GM10248 (cell line): ENCODE measurements at regions of chr2 and their contacts with region 1.

Region 1: GRCh38 chr2:42944779-42945415 is 152.5 kb upstream of the HAAO start:
- DNase-seq: no peak
- CTCF ChIP-seq: no peak

Region 2: GRCh38 chr2:42286268-42286946 is 658.5 kb before region 1 on chr2:
- CTCF ChIA-PET with region 1: no interaction called
- POLR2A ChIA-PET with region 1: no interaction called
- DNase-seq: no peak
- CTCF ChIP-seq: no peak

Region 3: DNA sequence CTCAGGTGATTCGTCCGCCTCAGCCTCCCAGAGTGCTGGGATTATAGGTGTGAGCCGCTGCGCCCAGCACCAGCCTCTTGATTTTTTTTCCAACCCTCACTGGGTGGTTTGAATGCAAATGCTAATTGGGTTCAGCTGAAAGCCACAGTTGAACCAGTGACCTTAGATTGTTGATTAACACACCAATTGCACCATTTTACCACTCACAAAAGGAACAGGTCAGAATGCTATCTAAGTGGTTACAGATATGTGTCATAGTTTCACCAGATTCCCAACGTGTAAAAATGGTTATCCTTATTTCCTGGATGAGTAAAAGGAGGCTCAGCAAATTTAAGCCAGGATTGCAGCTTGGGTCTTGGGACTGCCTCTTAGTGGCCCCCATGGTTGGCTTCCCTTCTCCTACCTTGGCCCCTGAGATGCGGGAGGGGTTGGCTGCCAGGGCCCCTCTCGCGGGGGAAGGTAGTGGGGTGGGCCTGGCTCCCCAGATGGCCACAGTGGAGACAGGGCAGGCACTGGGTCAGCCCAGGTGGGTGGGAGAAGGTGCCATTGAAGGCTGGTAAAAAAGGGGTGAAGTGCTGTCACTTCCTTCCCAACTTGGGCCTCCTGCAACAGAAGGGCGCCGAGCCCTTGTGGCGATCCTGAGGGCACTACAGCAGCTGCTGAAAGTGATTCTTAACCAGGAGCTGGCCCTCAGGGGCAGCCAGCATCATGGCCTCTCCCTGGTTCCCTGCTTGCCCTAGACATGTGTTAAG is 12.4 kb after region 1 on chr2:
- CTCF ChIA-PET with region 1: interaction called, 13 read pairs
- POLR2A ChIA-PET with region 1: no interaction called
- DNase-seq: no peak
- CTCF ChIP-seq: no peak

Region 4: GRCh38 chr2:42964439-42965083 is 19.7 kb after region 1 on chr2:
- CTCF ChIA-PET with region 1: interaction called, 13 read pairs
- POLR2A ChIA-PET with region 1: no interaction called
- DNase-seq: no peak
- CTCF ChIP-seq: no peak

Region 5: GRCh38 chr2:43576981-43577892 is 632.3 kb after region 1 on chr2:
- CTCF ChIA-PET with region 1: interaction called, 23 read pairs
- POLR2A ChIA-PET with region 1: no interaction called
- DNase-seq: peak; percentile 34
- CTCF ChIP-seq: peak; percentile 63